ENCODE measurements at regions of chr7 and their contacts with region 1.

Region 1: DNA sequence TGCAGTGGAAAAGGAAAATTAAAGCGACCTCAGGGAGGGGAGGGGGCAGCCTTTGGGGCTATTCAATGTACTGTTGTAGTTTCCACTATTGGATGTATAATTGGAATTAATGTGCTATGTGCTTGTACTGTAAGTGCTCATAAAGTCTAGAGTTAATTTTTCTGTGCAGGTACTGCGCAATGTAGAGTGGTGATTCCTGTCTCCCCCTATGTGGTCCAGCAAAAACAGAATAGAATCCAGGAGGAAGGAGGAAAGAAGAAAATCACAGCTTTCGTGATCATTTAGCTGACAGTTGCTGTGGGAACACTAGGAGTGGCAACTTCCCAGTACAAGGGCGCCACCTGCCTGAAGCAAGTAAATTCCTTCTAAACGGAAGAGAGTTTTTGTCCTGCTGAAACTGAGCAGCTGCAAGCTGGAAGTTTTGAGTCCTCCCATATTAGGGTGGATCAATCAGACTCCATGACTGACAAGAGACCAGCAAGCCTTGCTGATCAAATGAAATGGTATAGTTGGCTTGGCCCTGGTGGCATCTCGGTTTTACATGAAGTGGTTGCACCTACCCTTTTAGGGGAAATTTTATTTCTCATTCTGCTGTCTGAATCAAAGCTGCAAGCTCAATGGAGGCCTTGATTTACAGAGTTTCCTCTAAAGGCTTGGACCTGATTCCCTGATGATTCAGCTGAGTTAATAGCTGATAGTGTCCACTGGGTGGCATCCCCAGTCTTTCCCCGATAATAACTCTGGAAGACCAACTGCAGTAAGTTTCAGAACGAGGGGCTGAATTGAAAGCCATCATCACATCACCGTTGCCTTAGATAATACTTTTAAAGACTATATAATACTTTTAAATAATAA is 299.8 kb downstream of the HGF start:
- DNase-seq: peak; percentile 51
- H3K4me3 ChIP-seq: no peak overlapping the region
- H3K27ac ChIP-seq: no peak overlapping the region
- H3K4me1 ChIP-seq: peaks cover 2% of the 10 kb centered on the region
- H3K27me3 ChIP-seq: no peaks in the 10 kb centered on the region
- CTCF ChIP-seq: peak; percentile 70 to 82

Region 2: GRCh38 chr7:80095545-80095944 is 1374.6 kb before region 1 on chr7:
- CTCF ChIA-PET with region 1: no interaction called
- dilution Hi-C with region 1: no loop called
- in situ Hi-C with region 1: loop called in 1 of 2 experiments (anchors 25 kb)
- intact Hi-C with region 1: no loop called
- DNase-seq: no peak
- H3K4me3 ChIP-seq: no peak overlapping the region
- H3K27ac ChIP-seq: no peak overlapping the region
- H3K4me1 ChIP-seq: no peaks in the 10 kb centered on the region
- H3K27me3 ChIP-seq: no peaks in the 10 kb centered on the region
- CTCF ChIP-seq: peak; percentile 22 to 46